ENCODE measurements at regions of chr4 and their contacts with region 1.

Region 1: GRCh38 chr4:51831133-51831532 is 11.8 kb upstream of the DCUN1D4 start:
- H3K4me3 Mint-ChIP-seq: no peak overlapping the region
- H3K27ac Mint-ChIP-seq: no peak overlapping the region
- H3K4me1 Mint-ChIP-seq: no peaks in the 10 kb centered on the region
- H3K27me3 Mint-ChIP-seq: peaks cover 10% of the 10 kb centered on the region

Region 2: DNA sequence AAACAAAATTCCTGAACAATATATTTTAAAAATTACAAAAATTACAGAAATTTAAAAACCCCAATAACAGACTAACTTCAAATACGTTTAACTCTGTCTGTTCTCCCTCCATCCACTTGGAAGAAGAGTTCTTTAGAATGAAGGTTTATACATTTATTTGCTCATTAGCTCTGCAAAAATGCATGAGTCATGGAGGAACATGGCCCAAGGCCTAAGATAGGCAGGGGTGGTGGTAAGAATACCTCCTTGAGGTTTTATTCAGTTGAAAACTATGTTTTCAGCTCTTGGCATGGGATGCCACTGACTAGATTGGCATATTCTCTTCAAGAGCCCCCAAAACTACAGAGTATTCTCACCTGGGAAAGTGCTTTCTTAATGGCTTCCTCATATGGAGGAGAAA is 197.8 kb after region 1 on chr4:
- intact Hi-C with region 1: loop called (anchors 1 kb)
- H3K4me3 Mint-ChIP-seq: no peak overlapping the region
- H3K27ac Mint-ChIP-seq: no peak overlapping the region
- H3K4me1 Mint-ChIP-seq: peaks cover 11% of the 10 kb centered on the region
- H3K27me3 Mint-ChIP-seq: no peaks in the 10 kb centered on the region

Measured in dendritic cell treated with granulocyte-macrophage colony-stimulating factor and Interleukin-4, amounts not matched to agents 40 ng/mL and 50 ng/mL, for 4 days (primary cell).